ENCODE measurements at regions of chr15 and their contacts with region 1.

Region 1: GRCh38 chr15:56245871-56246814 is 2.5 kb upstream of the RFX7 start:
- DNase-seq: peak; percentile 92 to 95
- ATAC-seq: peak; percentile 90
- H3K4me3 ChIP-seq: no peak overlapping the region
- H3K27ac ChIP-seq: no peak overlapping the region
- H3K4me1 ChIP-seq: no peaks in the 10 kb centered on the region
- H3K27me3 ChIP-seq: no peaks in the 10 kb centered on the region

Region 2: GRCh38 chr15:55993111-55993803 is 252.9 kb before region 1 on chr15 and contains the start of gene NEDD4:
- intact Hi-C with region 1: loop called in 1 of 2 experiments (anchors 10 kb)
- DNase-seq: peak; percentile 92 to 95
- ATAC-seq: peak; percentile 97
- H3K4me3 ChIP-seq: peak within 1 kb of the TSS; percentile 74 to 82
- H3K27ac ChIP-seq: peak within 1 kb of the TSS; percentile 77 to 88
- H3K4me1 ChIP-seq: peaks cover 0 to 2% of the 10 kb centered on the region in 2 donors
- H3K27me3 ChIP-seq: no peaks in the 10 kb centered on the region
- total RNA-seq, gene NEDD4: 42.6 to 43.4 TPM

Region 3: DNA sequence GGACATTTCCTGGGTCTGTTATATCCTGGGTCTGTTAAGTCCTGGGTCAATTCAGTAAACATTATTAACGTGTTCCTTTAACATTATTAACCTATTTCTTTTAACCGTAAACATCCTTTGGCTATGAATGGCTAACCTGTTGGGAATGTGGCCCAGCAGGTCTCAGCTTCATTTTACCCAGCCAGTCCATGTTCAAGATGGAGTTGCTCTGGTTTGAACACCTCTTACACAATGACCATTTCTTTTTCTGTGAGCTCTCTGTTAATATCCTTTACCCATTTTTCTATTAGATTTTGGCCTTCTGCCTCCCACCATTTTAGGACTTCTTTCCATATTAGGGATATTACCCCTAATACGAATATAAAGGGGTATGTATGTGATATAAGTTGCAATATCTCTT is 163.8 kb before region 1 on chr15:
- intact Hi-C with region 1: no loop called
- DNase-seq: no peak
- ATAC-seq: no peak
- H3K4me3 ChIP-seq: no peak overlapping the region
- H3K27ac ChIP-seq: no peak overlapping the region
- H3K4me1 ChIP-seq: peaks cover 0 to 2% of the 10 kb centered on the region in 2 donors
- H3K27me3 ChIP-seq: no peaks in the 10 kb centered on the region

Region 4: GRCh38 chr15:56102441-56102840 is 143.7 kb before region 1 on chr15:
- intact Hi-C with region 1: loop called in 1 of 2 experiments (anchors 10 kb)
- DNase-seq: no peak
- ATAC-seq: peak; percentile 65
- H3K4me3 ChIP-seq: no peak overlapping the region
- H3K27ac ChIP-seq: no peak overlapping the region
- H3K4me1 ChIP-seq: no peaks in the 10 kb centered on the region
- H3K27me3 ChIP-seq: no peaks in the 10 kb centered on the region

Region 5: DNA sequence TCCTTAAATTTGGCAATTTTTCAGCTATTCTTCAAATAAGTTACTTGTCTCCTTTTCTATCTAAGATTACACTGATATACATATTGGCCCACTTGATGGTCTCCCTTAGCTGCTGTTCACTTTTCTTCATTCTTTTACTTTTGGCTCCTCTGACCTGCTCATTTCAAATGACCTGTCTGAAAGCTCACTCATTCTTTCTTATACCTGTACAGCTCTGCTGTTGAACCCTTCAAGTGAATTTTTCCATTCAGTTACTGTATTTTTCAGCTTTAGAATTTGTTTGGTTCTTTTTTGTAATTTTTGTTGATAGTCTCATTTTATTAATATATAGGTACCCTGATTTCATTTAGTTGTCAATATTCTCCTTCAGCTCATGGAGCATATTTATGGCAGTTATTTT is 179.1 kb after region 1 on chr15:
- intact Hi-C with region 1: no loop called
- DNase-seq: no peak
- ATAC-seq: no peak
- H3K4me3 ChIP-seq: no peak overlapping the region
- H3K27ac ChIP-seq: no peak overlapping the region
- H3K4me1 ChIP-seq: no peaks in the 10 kb centered on the region
- H3K27me3 ChIP-seq: no peaks in the 10 kb centered on the region